IMR-90 (cell line): ENCODE measurements at regions of chr13 and their contacts with region 1.

Region 1: DNA sequence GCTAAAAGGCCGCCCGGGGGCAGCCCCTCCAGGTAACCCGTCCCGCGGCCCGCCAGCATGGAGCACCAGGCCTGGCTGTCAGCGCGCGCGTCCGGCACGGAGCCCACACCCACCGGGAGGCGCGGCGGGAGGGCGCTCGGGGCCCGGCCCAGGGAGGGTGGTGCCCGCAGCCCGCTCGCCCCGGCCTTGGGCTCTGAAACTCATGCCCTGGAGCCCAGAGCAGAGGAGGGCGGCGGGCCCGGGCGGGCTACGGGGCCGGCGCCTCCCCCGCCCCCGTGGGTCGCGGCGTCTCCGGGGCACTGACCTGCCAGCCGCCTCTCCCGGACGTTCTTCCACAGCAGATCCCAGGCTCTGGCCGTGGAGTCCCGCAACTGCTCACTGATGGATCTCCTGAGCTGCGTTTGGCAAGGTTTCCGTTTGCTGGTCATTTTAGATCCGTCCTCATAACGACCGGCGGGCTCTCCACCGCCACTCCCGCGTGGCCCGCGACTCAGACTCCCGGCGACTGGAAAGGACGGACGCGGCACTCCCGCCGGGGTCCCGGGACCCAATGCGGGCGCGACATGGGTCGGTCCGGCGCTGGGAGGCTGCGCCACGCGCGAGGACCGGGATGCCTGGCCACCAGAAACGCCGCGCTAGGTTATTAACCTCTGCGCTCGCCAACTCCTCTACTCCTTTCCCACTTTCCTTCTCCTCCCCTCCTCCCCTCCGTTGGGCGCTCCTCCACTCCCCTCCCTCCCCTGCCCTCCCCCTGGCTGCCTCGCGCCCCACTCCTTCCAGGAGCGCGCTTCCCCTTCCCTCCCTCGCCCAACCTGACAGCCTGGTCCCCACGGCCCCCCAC is 64.7 kb upstream of the STARD13 start:
- DNase-seq: peak; percentile 39
- ATAC-seq: peak; percentile 70
- H3K4me3 ChIP-seq: peak overlapping the region; percentile 97
- H3K27ac ChIP-seq: peak overlapping the region; percentile 95
- H3K4me1 ChIP-seq: peaks cover 12% of the 10 kb centered on the region
- H3K27me3 ChIP-seq: no peaks in the 10 kb centered on the region
- CTCF ChIP-seq: no peak
- POLR2A ChIP-seq: no peak; the same call in 1 of the 2 replicates
- RAD21 ChIP-seq: no peak

Region 2: GRCh38 chr13:33080972-33081590 is 269.1 kb before region 1 on chr13:
- CTCF ChIA-PET with region 1: no interaction called
- POLR2A ChIA-PET with region 1: no interaction called
- dilution Hi-C with region 1: no loop called
- in situ Hi-C with region 1: no loop called
- intact Hi-C with region 1: no loop called
- DNase-seq: no peak
- ATAC-seq: no peak
- H3K4me3 ChIP-seq: no peak overlapping the region
- H3K27ac ChIP-seq: no peak overlapping the region
- H3K4me1 ChIP-seq: no peaks in the 10 kb centered on the region
- H3K27me3 ChIP-seq: no peaks in the 10 kb centered on the region; the same call in 1 of the 2 replicates
- CTCF ChIP-seq: no peak
- POLR2A ChIP-seq: no peak
- RAD21 ChIP-seq: no peak

Region 3: DNA sequence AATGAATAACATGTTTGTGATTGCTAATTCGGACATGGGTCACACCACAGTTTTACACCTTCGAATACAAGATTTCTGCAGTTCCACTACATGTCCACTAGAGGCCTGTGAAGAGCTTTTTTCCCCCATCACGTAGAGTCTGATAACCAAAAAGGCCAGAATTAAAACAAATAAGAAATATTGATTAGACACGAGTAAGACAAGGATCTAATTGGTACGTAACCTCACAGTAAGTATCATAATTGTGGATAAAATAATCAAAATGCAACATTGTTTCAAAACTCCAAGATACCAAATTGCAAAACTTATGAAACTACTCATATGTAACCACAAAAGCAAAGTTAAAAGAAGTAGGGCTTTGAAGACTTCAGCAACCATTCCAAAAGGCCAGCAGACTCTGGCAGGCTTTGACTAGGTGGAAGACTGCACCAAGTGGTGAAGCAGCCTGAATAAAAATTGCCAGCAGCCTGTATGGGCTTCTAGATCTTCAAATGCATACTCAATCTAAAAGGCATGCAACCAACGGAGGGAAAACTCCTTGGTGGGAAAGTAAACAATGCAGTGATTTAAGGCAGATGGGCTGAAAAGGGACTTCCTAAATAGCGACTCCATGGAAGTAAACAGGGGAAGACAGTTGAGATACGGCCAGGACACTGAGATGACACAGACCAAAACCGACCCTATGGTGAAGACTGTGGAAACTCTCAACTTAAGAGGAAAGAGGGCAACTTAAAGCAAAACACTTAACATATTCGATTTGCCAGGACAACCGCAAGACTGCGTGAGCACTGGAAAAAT is 121.4 kb before region 1 on chr13:
- CTCF ChIA-PET with region 1: no interaction called
- POLR2A ChIA-PET with region 1: no interaction called
- dilution Hi-C with region 1: no loop called
- in situ Hi-C with region 1: no loop called
- intact Hi-C with region 1: loop called (anchors 5 kb)
- DNase-seq: peak; percentile 83
- ATAC-seq: peak; percentile 46
- H3K4me3 ChIP-seq: peak overlapping the region; percentile 2; the same call in 1 of the 2 replicates
- H3K27ac ChIP-seq: peak overlapping the region; percentile 97
- H3K4me1 ChIP-seq: peaks cover 29% of the 10 kb centered on the region
- H3K27me3 ChIP-seq: no peaks in the 10 kb centered on the region
- CTCF ChIP-seq: peak; percentile 82
- POLR2A ChIP-seq: 0 out of 2 replicates have a peak, but pooled peaks have one; percentile 27
- RAD21 ChIP-seq: peak; percentile 83

Region 4: DNA sequence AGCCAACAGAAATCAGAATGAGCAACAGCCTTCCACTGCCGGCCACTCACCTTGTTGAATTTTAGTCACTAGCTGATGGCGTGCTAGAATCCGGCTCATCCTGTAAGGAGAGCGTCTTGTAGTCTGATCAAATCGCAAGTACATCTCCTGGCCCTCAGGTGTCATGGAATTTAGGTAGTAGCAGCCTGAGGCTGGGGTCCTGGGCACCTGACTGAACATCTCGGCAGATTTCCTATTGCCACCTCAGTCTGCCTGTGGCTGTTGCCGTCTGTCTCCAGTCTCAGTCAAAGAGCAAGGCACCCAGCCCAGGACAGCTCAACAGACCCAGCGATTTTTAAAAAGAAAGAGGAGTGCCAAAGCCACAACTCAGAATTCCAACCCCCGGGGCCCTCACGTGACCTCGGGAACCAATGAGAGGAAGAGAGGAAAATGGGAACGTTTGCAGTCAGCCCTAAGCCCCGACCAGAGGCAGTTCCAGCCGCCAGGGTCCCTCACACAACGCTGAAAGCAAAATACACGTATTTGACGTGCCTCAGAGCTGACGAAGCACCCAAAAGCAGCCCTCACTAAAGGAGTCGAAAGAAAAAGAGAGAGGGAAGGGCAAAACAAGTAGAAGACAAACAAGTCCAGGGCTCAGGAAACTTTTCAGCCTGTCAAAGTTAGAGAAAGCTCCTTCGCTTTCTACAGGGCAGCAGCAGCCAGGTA is 64.6 kb before region 1 on chr13 and contains the start of gene STARD13:
- CTCF ChIA-PET with region 1: no interaction called
- POLR2A ChIA-PET with region 1: interaction called, 3 read pairs
- dilution Hi-C with region 1: no loop called
- in situ Hi-C with region 1: no loop called
- intact Hi-C with region 1: loop called (anchors 1 kb)
- DNase-seq: peak; percentile 98
- ATAC-seq: peak; percentile 84
- H3K4me3 ChIP-seq: peak within 1 kb of the TSS; percentile 68
- H3K27ac ChIP-seq: peak within 1 kb of the TSS; percentile 97
- H3K4me1 ChIP-seq: peaks cover 17% of the 10 kb centered on the region
- H3K27me3 ChIP-seq: no peaks in the 10 kb centered on the region
- CTCF ChIP-seq: peak; percentile 64
- POLR2A ChIP-seq: peak; percentile 99
- RAD21 ChIP-seq: peak; percentile 60
- total RNA-seq, gene STARD13: 46.6 and 46.9 TPM in 2 replicates

Region 5: DNA sequence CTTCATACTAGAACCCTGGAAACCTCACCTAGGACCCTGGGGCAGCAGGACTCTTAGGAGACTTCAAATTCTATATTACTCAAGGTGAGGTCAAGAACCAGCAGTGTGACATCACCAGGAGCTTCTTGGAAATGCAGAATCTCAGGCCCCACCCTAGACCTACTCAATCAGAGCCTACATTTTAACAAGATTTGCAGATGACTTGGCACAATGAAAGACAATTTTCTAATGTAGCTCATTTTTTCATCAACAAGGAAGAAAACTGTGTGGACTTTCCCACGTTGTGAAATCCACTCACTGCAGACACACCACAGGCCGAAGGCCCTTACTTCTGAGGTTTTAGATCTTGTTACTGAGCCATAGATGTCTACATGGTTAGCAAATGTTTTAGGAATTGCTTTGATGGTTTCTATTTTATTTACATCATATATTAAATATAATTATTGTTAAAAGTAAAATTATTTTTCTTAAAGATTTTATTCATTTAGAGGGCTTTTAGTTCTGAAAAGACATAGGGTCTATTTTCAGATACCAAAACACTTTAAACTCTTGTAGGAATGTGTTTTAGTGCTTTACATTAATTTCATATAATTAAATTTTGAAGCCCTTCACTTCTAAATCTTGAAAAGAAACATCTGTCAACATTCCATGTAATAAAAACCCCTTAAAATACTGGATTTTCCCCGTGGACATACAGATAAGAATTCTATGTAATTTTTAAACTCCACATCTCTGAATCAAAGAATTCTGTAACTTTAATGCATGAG is 46.2 kb before region 1 on chr13:
- CTCF ChIA-PET with region 1: no interaction called
- POLR2A ChIA-PET with region 1: interaction called, 12 read pairs
- dilution Hi-C with region 1: no loop called
- in situ Hi-C with region 1: no loop called
- intact Hi-C with region 1: no loop called
- DNase-seq: peak; percentile 77
- ATAC-seq: no peak
- H3K4me3 ChIP-seq: no peak overlapping the region
- H3K27ac ChIP-seq: no peak overlapping the region
- H3K4me1 ChIP-seq: peaks cover 2% of the 10 kb centered on the region; the same call in 1 of the 2 replicates
- H3K27me3 ChIP-seq: no peaks in the 10 kb centered on the region
- CTCF ChIP-seq: no peak
- POLR2A ChIP-seq: no peak
- RAD21 ChIP-seq: no peak

Region 6: DNA sequence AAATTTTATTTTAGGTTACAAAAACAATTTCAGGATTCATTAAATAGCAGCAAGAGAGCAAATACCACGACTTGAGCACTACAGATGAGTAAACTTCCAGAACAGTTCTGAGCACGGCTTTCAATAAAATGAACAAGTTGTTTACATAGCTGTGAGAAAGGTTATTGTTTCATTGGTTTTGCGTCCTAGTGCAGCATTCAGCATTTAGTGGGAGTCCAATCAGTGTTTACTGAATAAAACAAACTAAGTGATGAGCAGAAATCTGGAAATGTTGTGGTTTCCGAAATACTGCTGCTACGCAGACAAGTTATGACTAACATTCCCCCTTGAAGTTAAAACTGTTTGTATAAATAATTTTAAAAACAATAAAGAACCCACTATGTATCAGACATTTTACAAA is 186.8 kb after region 1 on chr13:
- CTCF ChIA-PET with region 1: no interaction called
- POLR2A ChIA-PET with region 1: no interaction called
- dilution Hi-C with region 1: no loop called
- in situ Hi-C with region 1: loop called (anchors 10 kb)
- intact Hi-C with region 1: loop called (anchors 1 kb)
- DNase-seq: peak; percentile 95
- ATAC-seq: peak; percentile 88
- H3K4me3 ChIP-seq: no peak overlapping the region
- H3K27ac ChIP-seq: no peak overlapping the region
- H3K4me1 ChIP-seq: peaks cover 13% of the 10 kb centered on the region
- H3K27me3 ChIP-seq: no peaks in the 10 kb centered on the region
- CTCF ChIP-seq: no peak
- POLR2A ChIP-seq: 0 out of 2 replicates have a peak, but pooled peaks have one; percentile 30
- RAD21 ChIP-seq: peak; percentile 27; the same call in 1 of the 2 replicates

Region 7: GRCh38 chr13:33560726-33561125 is 210.5 kb after region 1 on chr13:
- CTCF ChIA-PET with region 1: no interaction called
- POLR2A ChIA-PET with region 1: no interaction called
- dilution Hi-C with region 1: no loop called
- in situ Hi-C with region 1: no loop called
- intact Hi-C with region 1: no loop called
- DNase-seq: no peak
- ATAC-seq: no peak
- H3K4me3 ChIP-seq: no peak overlapping the region
- H3K27ac ChIP-seq: no peak overlapping the region
- H3K4me1 ChIP-seq: no peaks in the 10 kb centered on the region
- H3K27me3 ChIP-seq: no peaks in the 10 kb centered on the region
- CTCF ChIP-seq: no peak
- POLR2A ChIP-seq: no peak
- RAD21 ChIP-seq: no peak

Region 8: DNA sequence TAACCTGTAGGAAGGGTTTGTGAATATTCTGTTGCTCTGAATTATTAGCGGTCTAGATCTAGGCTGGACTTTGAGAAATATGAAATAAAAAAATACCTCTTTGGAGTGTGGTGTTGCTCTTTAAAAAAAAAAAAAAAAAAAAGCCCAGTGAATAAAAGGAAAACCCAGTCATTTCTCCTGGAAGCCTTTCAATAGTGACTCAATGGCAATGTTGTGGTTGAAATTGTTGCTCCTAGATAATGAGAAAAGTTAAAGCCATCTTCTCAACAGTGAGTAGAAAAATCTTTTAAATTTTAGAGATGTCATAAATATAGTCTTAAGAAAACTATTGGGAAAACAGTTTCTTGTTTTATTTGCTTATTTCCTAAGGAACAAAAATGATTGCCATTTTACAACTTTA is 603.0 kb after region 1 on chr13:
- CTCF ChIA-PET with region 1: no interaction called
- POLR2A ChIA-PET with region 1: no interaction called
- dilution Hi-C with region 1: no loop called
- in situ Hi-C with region 1: no loop called
- intact Hi-C with region 1: no loop called
- DNase-seq: peak; percentile 26
- ATAC-seq: no peak
- H3K4me3 ChIP-seq: no peak overlapping the region
- H3K27ac ChIP-seq: no peak overlapping the region
- H3K4me1 ChIP-seq: no peaks in the 10 kb centered on the region
- H3K27me3 ChIP-seq: no peaks in the 10 kb centered on the region
- CTCF ChIP-seq: no peak
- POLR2A ChIP-seq: no peak
- RAD21 ChIP-seq: no peak